ENCODE measurements at regions of chr10 and their contacts with region 1.

Region 1: GRCh38 chr10:76547352-76547972 is 1090.1 kb downstream of the KCNMA1 start:
- DNase-seq: peak; percentile 85 to 91
- H3K4me3 ChIP-seq: no peak overlapping the region
- H3K27ac ChIP-seq: no peak overlapping the region
- H3K4me1 ChIP-seq: peaks cover 0 to 21% (median 3%) of the 10 kb centered on the region in 4 donors
- H3K27me3 ChIP-seq: no peaks in the 10 kb centered on the region
- CTCF ChIP-seq: peak; percentile 83 to 88

Region 2: DNA sequence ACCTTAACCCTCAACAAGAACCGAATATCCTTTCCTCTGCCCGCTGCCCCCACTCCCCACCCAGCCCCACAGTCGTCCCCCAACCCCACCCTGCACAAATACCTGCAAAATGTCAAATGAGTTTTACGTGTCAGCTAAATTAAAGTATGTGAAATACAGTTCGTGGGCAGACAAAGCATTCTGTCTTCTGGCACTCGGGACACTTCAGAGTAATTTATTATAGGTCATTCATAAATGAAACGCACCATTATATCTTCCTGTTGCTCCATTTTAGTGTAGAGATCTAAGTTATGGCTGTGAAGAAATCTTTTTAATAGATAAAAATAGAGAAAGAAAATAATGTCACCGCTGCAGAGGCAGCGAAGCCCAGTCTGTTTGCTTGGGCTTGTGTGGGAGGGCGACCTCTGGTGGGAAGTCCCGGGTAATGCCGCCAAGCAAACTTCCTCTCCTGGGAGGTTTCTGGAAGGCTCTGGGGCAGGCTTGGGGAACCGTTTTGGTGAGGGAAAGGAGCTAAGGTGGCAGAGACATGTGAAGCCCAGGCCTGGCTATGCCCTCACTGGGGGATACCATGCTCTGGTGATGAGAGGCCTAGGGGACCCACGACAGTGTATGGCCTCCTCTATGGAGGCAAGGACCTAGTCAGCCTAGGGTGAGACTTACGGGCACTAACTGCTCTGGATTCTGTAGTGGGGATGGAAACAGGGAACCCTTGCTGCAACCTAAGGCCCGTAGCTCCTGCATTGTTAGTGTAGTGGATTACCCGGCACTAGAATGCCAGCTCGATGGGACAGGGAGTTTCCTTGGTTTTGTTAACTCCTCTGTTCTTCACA is 511.1 kb before region 1 on chr10:
- intact Hi-C with region 1: loop called (anchors 10 kb)
- DNase-seq: peak; percentile 75 to 88
- H3K4me3 ChIP-seq: peak overlapping the region; percentile 24 to 36
- H3K27ac ChIP-seq: peak overlapping the region; percentile 11 to 39
- H3K4me1 ChIP-seq: peaks cover 0 to 35% (median 10%) of the 10 kb centered on the region in 4 donors
- H3K27me3 ChIP-seq: no peaks in the 10 kb centered on the region
- CTCF ChIP-seq: peak; percentile 88 to 95

Region 3: DNA sequence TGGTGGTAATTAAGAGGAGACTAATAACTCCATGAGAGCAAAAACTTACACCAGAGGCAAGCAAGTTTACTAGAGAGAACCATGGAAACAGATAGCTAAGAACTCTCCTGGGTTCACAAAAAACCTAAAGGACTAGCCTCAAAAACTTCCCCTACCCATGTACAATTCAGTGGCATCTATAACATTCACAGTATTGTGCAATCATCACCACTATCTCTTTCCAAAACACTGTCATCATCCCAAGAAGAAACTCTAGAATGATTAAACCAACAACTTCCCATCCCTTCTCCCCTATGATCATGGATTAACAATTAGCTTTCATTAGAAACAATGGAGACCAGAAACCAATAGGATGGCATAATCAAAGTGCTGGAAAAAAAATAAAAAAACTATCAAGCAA is 77.8 kb before region 1 on chr10:
- intact Hi-C with region 1: no loop called
- DNase-seq: no peak
- H3K4me3 ChIP-seq: no peak overlapping the region
- H3K27ac ChIP-seq: no peak overlapping the region
- H3K4me1 ChIP-seq: peaks cover 0 to 12% (median 0%) of the 10 kb centered on the region in 4 donors
- H3K27me3 ChIP-seq: no peaks in the 10 kb centered on the region
- CTCF ChIP-seq: no peak

Region 4: DNA sequence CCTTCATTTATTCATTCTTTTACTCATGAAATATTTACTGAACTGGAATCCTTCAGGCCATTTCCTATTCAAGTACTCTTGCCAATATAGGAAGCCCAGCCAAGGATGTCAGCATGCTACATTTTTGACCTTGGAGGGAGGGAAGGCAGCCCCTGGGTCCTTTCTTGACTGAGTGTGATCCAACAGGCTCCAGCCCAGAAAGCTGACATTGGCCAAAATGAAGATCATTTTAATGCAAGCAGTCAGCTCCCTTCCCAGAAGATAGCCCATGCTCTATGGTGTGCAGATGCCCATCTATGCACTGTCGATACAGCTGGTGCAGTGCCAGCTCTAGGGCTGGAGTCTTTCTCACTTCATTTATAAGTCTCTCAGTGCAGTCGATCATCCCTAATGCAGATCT is 444.2 kb after region 1 on chr10:
- intact Hi-C with region 1: loop called (anchors 5 kb)
- DNase-seq: no peak
- H3K4me3 ChIP-seq: no peak overlapping the region
- H3K27ac ChIP-seq: no peak overlapping the region
- H3K4me1 ChIP-seq: peaks cover 0 to 25% (median 13%) of the 10 kb centered on the region in 4 donors
- H3K27me3 ChIP-seq: no peaks in the 10 kb centered on the region
- CTCF ChIP-seq: no peak

Measured in tibial artery (tissue), 4 donors.